Activated naive CD4-positive, alpha-beta T cell treated with anti-CD3 and anti-CD28 coated beads, Interleukin-2, amount 10 ng/mL, durations not matched to agents 7 days and 5 days (primary cell): ENCODE measurements at regions of chr19 and their contacts with region 1.

Region 1: GRCh38 chr19:14059093-14059480 is 2.8 kb downstream of the PALM3 start:
- DNase-seq: peak; percentile 69
- H3K4me3 Mint-ChIP-seq: no peak overlapping the region
- H3K27ac Mint-ChIP-seq: no peak overlapping the region
- H3K4me1 Mint-ChIP-seq: peaks cover 21% of the 10 kb centered on the region
- H3K27me3 Mint-ChIP-seq: peaks cover 79% of the 10 kb centered on the region

Region 2: DNA sequence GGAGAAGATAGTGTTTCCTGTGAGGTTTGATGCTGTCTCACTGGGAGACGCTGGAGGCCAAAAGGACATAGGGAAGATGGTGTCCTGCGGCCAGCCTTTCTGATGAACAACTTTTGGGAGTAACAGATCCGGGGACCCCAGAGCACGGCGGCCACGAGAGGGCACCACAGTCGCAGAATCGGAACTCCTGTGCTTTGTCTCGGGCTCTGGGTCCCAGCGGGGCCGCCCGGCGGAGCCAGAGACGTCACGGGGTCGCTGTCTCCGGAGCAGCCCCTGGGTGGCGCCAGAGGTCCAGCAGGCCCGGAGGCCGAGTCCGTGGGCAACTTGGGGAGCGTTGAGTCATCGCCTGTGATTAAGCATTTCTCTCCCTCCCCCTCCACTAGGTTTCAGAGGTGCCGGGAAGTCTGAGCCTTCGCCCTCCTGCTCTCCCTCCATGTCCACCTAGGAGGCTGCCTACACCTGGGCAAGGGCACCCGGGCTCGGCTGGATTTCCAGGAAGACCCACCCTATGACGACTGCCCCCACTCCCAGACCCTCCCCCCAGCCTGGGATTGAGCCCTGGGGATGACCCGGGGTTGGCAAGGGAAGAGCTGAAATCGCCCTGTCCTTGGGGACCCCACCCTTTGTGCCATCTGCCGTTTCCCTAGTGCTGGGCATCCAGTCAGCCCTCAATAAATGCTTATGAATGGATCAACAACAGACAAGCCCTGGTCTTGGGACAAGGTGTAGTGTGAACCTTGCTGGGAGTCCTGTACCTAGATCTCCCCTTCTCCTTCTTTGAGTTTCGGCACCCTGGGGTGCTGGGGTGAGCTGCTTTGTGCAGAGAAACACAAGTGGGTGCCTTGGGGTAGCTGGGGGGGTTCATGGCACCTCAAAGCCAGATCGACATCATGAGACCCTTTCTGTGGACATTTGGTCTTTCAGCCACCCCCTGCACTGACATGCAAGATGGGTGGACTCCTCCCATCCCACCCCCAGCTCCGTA is 178.7 kb before region 1 on chr19:
- CTCF ChIA-PET with region 1: interaction called, 22 read pairs
- DNase-seq: peak; percentile 98
- H3K4me3 Mint-ChIP-seq: peak overlapping the region; percentile 35
- H3K27ac Mint-ChIP-seq: peak overlapping the region; percentile 87
- H3K4me1 Mint-ChIP-seq: peaks cover 46% of the 10 kb centered on the region
- H3K27me3 Mint-ChIP-seq: peaks cover 24% of the 10 kb centered on the region

Region 3: GRCh38 chr19:13887517-13887916 is 171.6 kb before region 1 on chr19:
- CTCF ChIA-PET with region 1: interaction called, 22 read pairs
- DNase-seq: no peak
- H3K4me3 Mint-ChIP-seq: no peak overlapping the region
- H3K27ac Mint-ChIP-seq: no peak overlapping the region
- H3K4me1 Mint-ChIP-seq: peaks cover 14% of the 10 kb centered on the region
- H3K27me3 Mint-ChIP-seq: peaks cover 24% of the 10 kb centered on the region

Region 4: GRCh38 chr19:13952154-13953035 is 106.7 kb before region 1 on chr19 and contains the start of gene DCAF15:
- CTCF ChIA-PET with region 1: interaction called, 12 read pairs
- DNase-seq: peak; percentile 100
- H3K4me3 Mint-ChIP-seq: peak within 1 kb of the TSS; percentile 95
- H3K27ac Mint-ChIP-seq: peak within 1 kb of the TSS; percentile 92
- H3K4me1 Mint-ChIP-seq: peaks cover 27% of the 10 kb centered on the region
- H3K27me3 Mint-ChIP-seq: peaks cover 5% of the 10 kb centered on the region

Region 5: DNA sequence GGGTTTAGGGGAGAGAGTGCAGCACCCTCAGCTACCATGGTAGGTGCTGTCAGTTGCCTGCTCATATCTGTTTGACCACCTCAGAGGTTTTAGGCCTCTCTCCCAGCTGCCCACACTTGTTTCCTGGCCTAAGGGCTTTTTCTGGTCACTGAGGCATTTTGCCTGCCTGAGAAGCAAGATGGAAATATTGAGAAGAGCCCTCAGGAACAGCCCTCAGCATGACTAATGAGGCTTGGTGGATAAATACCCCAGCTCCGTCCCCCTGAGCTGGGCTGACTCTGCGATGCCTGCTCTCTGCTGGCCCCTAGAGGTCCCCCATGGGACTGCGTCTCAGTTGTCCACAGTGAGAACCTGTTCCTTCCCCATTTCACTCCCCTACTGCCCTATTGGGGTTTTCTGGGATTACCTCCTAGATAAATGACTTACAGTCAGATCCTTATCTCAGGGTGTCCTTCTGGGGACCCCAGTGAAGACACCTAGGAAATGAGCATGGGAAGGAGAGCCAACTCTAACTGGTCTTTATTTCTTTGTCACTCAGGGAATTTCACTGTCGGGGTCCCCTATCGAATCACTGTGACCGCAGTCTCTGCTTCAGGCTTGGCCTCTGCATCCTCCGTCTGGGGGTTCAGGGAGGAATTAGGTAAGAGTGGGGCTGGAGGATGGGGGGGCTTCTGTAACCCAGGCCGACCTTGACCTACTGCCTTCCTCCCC is 10.5 kb before region 1 on chr19:
- CTCF ChIA-PET with region 1: interaction called, 56 read pairs
- DNase-seq: peak; percentile 80
- H3K4me3 Mint-ChIP-seq: no peak overlapping the region
- H3K27ac Mint-ChIP-seq: peak overlapping the region; percentile 49
- H3K4me1 Mint-ChIP-seq: no peaks in the 10 kb centered on the region
- H3K27me3 Mint-ChIP-seq: no peaks in the 10 kb centered on the region

Region 6: GRCh38 chr19:14073261-14073924 is 14.3 kb after region 1 on chr19:
- CTCF ChIA-PET with region 1: interaction called, 70 read pairs
- DNase-seq: peak; percentile 81
- H3K4me3 Mint-ChIP-seq: peak overlapping the region; percentile 91
- H3K27ac Mint-ChIP-seq: peak overlapping the region; percentile 85
- H3K4me1 Mint-ChIP-seq: peaks cover 32% of the 10 kb centered on the region
- H3K27me3 Mint-ChIP-seq: peaks cover 59% of the 10 kb centered on the region

Region 7: GRCh38 chr19:14114854-14115253 is 55.8 kb after region 1 on chr19:
- CTCF ChIA-PET with region 1: interaction called, 10 read pairs
- DNase-seq: peak; percentile 69
- H3K4me3 Mint-ChIP-seq: no peak overlapping the region
- H3K27ac Mint-ChIP-seq: no peak overlapping the region
- H3K4me1 Mint-ChIP-seq: peaks cover 61% of the 10 kb centered on the region
- H3K27me3 Mint-ChIP-seq: no peaks in the 10 kb centered on the region